Mammary epithelial cell (primary cell): ENCODE measurements at regions of chr5 and their contacts with region 1.

Region 1: GRCh38 chr5:133868946-133869518 is 99.4 kb downstream of the C5orf15 start:
- DNase-seq: peak; percentile 39
- H3K4me3 ChIP-seq: no peak overlapping the region
- H3K27ac ChIP-seq: no peak overlapping the region
- H3K4me1 ChIP-seq: no peaks in the 10 kb centered on the region
- H3K27me3 ChIP-seq: no peaks in the 10 kb centered on the region
- CTCF ChIP-seq: peak; percentile 82 to 85

Region 2: GRCh38 chr5:133423618-133424282 is 445.3 kb before region 1 on chr5:
- CTCF ChIA-PET with region 1: interaction called, 6 read pairs
- dilution Hi-C with region 1: no loop called
- in situ Hi-C with region 1: no loop called
- intact Hi-C with region 1: loop called (anchors 2 kb)
- DNase-seq: peak; percentile 69
- H3K4me3 ChIP-seq: no peak overlapping the region
- H3K27ac ChIP-seq: peak overlapping the region; percentile 11
- H3K4me1 ChIP-seq: peaks cover 21% of the 10 kb centered on the region
- H3K27me3 ChIP-seq: no peaks in the 10 kb centered on the region
- CTCF ChIP-seq: peak; percentile 72 to 75

Region 3: DNA sequence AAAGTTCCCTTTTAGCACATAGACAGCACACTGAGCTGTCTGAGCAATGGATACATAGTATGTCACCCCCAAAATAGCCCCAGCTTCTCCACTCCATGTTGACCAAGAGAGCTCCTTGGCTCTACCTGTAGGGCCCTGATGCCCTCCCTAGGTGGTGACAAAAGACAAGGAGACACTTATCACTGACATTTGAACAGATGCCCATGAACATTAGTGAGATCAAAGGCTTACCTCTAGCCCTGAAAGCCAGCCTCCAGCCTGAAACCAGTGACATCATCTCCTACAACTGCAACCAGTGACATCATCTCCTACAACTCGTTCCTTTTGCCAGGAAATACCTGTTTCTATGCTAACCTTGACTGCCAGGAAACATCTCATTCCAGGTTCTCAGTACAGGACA is 379.4 kb before region 1 on chr5:
- CTCF ChIA-PET with region 1: interaction called, 3 read pairs
- dilution Hi-C with region 1: no loop called
- in situ Hi-C with region 1: no loop called
- intact Hi-C with region 1: loop called (anchors 5 kb)
- DNase-seq: peak; percentile 37
- H3K4me3 ChIP-seq: no peak overlapping the region
- H3K27ac ChIP-seq: no peak overlapping the region
- H3K4me1 ChIP-seq: no peaks in the 10 kb centered on the region
- H3K27me3 ChIP-seq: no peaks in the 10 kb centered on the region
- CTCF ChIP-seq: peak in 1 of 2 donors; percentile 52

Region 4: GRCh38 chr5:133552931-133553525 is 316.0 kb before region 1 on chr5:
- CTCF ChIA-PET with region 1: interaction called, 4 read pairs
- dilution Hi-C with region 1: no loop called
- in situ Hi-C with region 1: no loop called
- intact Hi-C with region 1: loop called (anchors 1 kb)
- DNase-seq: peak; percentile 47
- H3K4me3 ChIP-seq: no peak overlapping the region
- H3K27ac ChIP-seq: no peak overlapping the region
- H3K4me1 ChIP-seq: no peaks in the 10 kb centered on the region
- H3K27me3 ChIP-seq: no peaks in the 10 kb centered on the region
- CTCF ChIP-seq: peak; percentile 77 to 81

Region 5: GRCh38 chr5:133658327-133658726 is 210.7 kb before region 1 on chr5:
- CTCF ChIA-PET with region 1: no interaction called
- dilution Hi-C with region 1: no loop called
- in situ Hi-C with region 1: no loop called
- intact Hi-C with region 1: loop called (anchors 10 kb)
- DNase-seq: no peak
- H3K4me3 ChIP-seq: no peak overlapping the region
- H3K27ac ChIP-seq: no peak overlapping the region
- H3K4me1 ChIP-seq: no peaks in the 10 kb centered on the region
- H3K27me3 ChIP-seq: peaks cover 3% of the 10 kb centered on the region
- CTCF ChIP-seq: no peak

Region 6: GRCh38 chr5:133818031-133818431 is 51.0 kb before region 1 on chr5:
- CTCF ChIA-PET with region 1: no interaction called
- dilution Hi-C with region 1: loop called (anchors 5 kb)
- in situ Hi-C with region 1: no loop called
- intact Hi-C with region 1: no loop called
- DNase-seq: peak; percentile 21
- H3K4me3 ChIP-seq: no peak overlapping the region
- H3K27ac ChIP-seq: no peak overlapping the region
- H3K4me1 ChIP-seq: peaks cover 7% of the 10 kb centered on the region
- H3K27me3 ChIP-seq: peaks cover 5% of the 10 kb centered on the region
- CTCF ChIP-seq: no peak

Region 7: GRCh38 chr5:133944263-133945185 is 75.5 kb after region 1 on chr5:
- CTCF ChIA-PET with region 1: no interaction called
- dilution Hi-C with region 1: loop called (anchors 5 kb)
- in situ Hi-C with region 1: no loop called
- intact Hi-C with region 1: no loop called
- DNase-seq: peak; percentile 44
- H3K4me3 ChIP-seq: no peak overlapping the region
- H3K27ac ChIP-seq: no peak overlapping the region
- H3K4me1 ChIP-seq: no peaks in the 10 kb centered on the region
- H3K27me3 ChIP-seq: no peaks in the 10 kb centered on the region
- CTCF ChIP-seq: peak; percentile 71 to 82